H1 (cell line): ENCODE measurements at regions of chr13 and their contacts with region 1.

Region 1: DNA sequence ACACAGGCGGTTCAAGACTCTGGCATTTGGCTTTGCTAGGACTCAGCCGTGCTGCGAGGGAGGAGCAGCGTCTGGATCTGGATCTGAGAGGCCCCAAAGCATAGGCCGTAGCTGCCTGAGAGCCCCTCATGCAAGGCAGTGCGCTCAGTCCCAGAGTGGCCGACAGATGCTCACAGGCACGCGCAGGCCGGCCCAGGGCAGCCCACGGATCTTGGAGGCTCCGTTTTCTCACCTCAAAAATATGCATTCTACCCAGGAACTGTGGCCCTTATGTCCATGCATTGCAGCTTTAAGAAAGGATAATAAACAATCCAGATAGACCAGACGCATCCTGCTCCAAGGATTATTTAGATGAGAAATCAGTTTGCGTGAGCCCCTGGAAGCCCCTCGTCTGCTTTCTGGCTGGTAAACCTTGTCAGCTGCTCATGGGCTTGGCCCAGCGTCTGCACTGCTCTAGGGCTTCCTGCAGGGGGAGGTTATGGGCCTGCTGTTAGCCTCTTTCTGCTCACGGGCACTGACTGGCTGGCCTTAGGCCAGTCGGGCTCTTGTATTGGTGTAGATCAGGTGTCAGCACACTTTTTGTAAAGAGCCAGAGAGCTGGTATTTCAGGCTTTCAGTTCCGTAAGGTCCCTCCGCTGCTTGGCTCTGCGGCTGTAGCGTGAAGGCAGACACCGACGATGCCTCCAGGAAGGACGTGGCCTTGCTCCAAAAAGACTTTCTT is 24.2 kb downstream of the TEX29 start:
- DNase-seq: peak; percentile 70 to 84
- H3K4me3 ChIP-seq: no peak overlapping the region
- H3K27ac ChIP-seq: no peak overlapping the region
- H3K4me1 ChIP-seq: peaks cover 0 to 5% (median 2%) of the 10 kb centered on the region in 4 experiments; a peak in 4 of 7 replicates
- H3K27me3 ChIP-seq: no peaks in the 10 kb centered on the region
- CTCF ChIP-seq: peak; percentile 78 to 95 (median 81)
- EP300 ChIP-seq: no peak
- POLR2A ChIP-seq: no peak
- RAD21 ChIP-seq: peak; percentile 77 to 86

Region 2: DNA sequence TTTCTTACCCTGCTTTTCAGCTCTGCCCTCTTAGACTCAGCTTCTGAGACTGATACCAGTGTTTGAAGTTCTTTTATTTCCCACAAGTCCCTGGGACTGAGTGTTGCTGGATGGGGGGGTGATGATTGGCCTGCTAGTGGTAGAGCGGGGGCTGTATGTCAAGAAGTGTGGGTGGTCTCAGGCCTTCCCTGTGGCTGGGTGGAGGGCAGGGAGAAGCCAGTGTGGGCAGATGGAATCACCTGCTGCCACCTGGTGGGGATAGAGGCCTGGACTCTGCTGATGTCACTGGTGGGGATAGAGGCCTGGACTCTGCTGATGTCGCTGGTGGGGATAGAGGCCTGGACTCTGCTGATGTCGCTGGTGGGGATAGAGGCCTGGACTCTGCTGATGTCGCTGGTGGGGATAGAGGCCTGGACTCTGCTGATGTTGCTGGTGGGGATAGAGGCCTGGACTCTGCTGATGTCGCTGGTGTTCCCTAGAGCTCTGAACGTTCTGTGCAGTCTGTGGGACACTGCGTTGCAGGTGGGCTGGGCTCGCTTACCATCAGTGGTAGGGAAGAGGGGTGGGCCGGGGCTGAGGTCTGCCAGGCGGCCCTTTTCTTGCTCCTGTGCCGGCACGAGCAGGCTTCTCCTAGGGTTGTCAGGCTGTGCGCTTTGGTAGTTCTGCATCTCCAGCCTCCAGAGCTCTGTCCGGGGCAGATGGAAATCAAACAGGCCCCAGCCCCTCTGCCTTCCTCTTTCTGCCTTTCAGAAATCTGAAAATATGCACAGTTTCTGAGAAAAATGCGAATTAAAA is 128.3 kb before region 1 on chr13:
- CTCF ChIA-PET with region 1: no interaction called
- POLR2A ChIA-PET with region 1: no interaction called
- DNase-seq: peak in 1 of 2 experiments; percentile 72
- H3K4me3 ChIP-seq: peak overlapping the region in 1 of 4 experiments; percentile 35; a peak in 1 of 8 replicates
- H3K27ac ChIP-seq: no peak overlapping the region
- H3K4me1 ChIP-seq: peaks cover 23 to 47% (median 35%) of the 10 kb centered on the region in 4 experiments
- H3K27me3 ChIP-seq: no peaks in the 10 kb centered on the region
- CTCF ChIP-seq: peak; percentile 58 to 76 (median 62)
- EP300 ChIP-seq: no peak
- POLR2A ChIP-seq: no peak
- RAD21 ChIP-seq: peak; percentile 65 to 71

Region 3: GRCh38 chr13:111398715-111399299 is 54.2 kb after region 1 on chr13:
- CTCF ChIA-PET with region 1: interaction called, 31 read pairs
- POLR2A ChIA-PET with region 1: no interaction called
- DNase-seq: no peak
- H3K4me3 ChIP-seq: no peak overlapping the region
- H3K27ac ChIP-seq: no peak overlapping the region
- H3K4me1 ChIP-seq: no peaks in the 10 kb centered on the region; a peak in 1 of 7 replicates
- H3K27me3 ChIP-seq: no peaks in the 10 kb centered on the region
- CTCF ChIP-seq: no peak
- EP300 ChIP-seq: no peak
- POLR2A ChIP-seq: no peak
- RAD21 ChIP-seq: no peak

Region 4: GRCh38 chr13:111411151-111411858 is 66.7 kb after region 1 on chr13:
- CTCF ChIA-PET with region 1: interaction called, 31 read pairs
- POLR2A ChIA-PET with region 1: no interaction called
- DNase-seq: no peak
- H3K4me3 ChIP-seq: no peak overlapping the region
- H3K27ac ChIP-seq: no peak overlapping the region
- H3K4me1 ChIP-seq: peaks cover 0 to 6% (median 3%) of the 10 kb centered on the region in 4 experiments; a peak in 2 of 7 replicates
- H3K27me3 ChIP-seq: no peaks in the 10 kb centered on the region
- CTCF ChIP-seq: no peak
- EP300 ChIP-seq: no peak
- POLR2A ChIP-seq: no peak
- RAD21 ChIP-seq: no peak

Region 5: GRCh38 chr13:111604087-111604486 is 259.5 kb after region 1 on chr13:
- CTCF ChIA-PET with region 1: no interaction called
- POLR2A ChIA-PET with region 1: no interaction called
- DNase-seq: peak in 1 of 2 experiments; percentile 54
- H3K4me3 ChIP-seq: no peak overlapping the region
- H3K27ac ChIP-seq: no peak overlapping the region
- H3K4me1 ChIP-seq: peaks cover 0 to 4% (median under 1%) of the 10 kb centered on the region in 4 experiments; a peak in 2 of 7 replicates
- H3K27me3 ChIP-seq: no peaks in the 10 kb centered on the region
- CTCF ChIP-seq: peak; percentile 62 to 76 (median 72)
- EP300 ChIP-seq: no peak
- POLR2A ChIP-seq: no peak
- RAD21 ChIP-seq: peak; percentile 60 to 69